BJ (cell line): ENCODE measurements at regions of chr1 and their contacts with region 1.

Region 1: DNA sequence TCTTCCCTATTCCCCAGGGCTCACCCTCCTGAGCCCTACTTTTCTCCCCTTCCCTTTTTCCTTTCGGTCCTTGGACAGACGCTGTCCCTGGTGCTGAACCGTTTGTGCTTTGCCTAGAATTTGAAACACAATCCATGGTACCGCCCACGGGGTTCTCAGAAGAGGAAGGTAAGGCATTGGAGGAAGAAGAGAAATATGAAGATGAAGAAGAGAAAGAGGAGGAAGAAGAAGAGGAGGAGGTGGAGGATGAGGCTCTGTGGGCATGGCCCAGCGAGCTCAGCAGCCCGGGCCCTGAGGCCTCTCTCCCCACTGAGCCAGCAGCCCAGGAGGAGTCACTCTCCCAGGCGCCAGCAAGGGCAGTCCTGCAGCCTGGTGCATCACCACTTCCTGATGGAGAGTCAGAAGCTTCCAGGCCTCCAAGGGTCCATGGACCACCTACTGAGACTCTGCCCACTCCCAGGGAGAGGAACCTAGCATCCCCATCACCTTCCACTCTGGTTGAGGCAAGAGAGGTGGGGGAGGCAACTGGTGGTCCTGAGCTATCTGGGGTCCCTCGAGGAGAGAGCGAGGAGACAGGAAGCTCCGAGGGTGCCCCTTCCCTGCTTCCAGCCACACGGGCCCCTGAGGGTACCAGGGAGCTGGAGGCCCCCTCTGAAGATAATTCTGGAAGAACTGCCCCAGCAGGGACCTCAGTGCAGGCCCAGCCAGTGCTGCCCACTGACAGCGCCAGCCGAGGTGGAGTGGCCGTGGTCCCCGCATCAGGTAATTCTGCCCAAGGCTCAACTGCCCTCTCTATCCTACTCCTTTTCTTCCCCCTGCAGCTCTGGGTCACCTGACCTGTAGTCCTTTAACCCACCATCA is 10.4 kb downstream of the BCAN start:
- DNase-seq: no peak
- H3K4me3 ChIP-seq: no peak overlapping the region
- H3K27me3 ChIP-seq: peaks cover 41% of the 10 kb centered on the region
- CTCF ChIP-seq: no peak

Region 2: GRCh38 chr1:156612666-156613065 is 39.7 kb before region 1 on chr1:
- CTCF ChIA-PET with region 1: no interaction called
- POLR2A ChIA-PET with region 1: no interaction called
- DNase-seq: no peak
- H3K4me3 ChIP-seq: no peak overlapping the region
- H3K27me3 ChIP-seq: peaks cover 14% of the 10 kb centered on the region
- CTCF ChIP-seq: no peak

Region 3: DNA sequence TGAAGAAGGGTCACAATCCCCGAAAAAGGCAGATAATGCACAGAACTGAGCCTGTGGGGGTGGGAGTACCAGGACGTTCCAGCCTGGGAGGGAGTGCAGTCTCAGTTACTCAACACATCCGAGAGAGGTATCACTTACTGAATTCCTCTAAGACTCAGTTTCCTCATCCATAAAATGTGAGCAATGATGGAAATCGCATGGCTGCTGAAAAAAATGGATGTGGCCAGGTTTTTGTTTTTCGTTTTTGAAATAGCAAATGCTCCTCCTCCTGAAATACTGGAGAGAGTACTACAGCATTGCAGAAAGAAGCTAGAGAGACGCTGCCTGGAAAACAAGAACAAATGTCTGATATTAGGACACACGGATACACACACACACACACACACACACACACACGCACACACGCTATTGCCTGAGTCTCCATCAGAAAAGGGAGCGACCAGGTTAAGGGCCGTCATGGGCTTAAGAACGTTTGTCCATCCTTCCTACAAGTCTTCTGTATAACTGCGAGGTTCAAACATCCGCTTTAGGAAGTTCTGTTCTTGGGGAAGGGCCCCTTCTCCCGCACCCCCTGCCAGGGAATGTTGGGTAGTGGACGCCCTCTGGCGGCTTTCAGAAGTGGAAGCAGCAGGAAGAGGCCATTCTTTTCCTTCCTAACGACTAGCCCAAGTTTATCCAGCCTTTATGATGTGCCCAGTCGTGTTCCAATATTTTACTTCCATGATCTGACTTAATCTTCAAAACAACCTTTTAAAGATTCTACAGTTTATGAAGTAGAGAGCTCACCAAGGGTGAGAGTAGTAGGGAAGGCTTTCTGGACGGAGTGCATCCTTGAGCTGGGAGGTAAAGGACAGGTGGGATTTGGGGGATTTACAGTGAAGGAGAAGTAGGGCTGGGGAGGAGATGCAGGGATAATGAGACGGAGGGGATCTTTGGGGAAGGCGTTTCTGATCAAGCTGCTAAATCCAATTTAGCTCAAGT is 25.5 kb after region 1 on chr1:
- CTCF ChIA-PET with region 1: interaction called, 548 read pairs
- POLR2A ChIA-PET with region 1: no interaction called
- DNase-seq: no peak
- H3K4me3 ChIP-seq: peak overlapping the region; percentile 55
- H3K27me3 ChIP-seq: no peaks in the 10 kb centered on the region
- CTCF ChIP-seq: peak; percentile 93